ENCODE measurements at regions of chr12 and their contacts with region 1.

Region 1: DNA sequence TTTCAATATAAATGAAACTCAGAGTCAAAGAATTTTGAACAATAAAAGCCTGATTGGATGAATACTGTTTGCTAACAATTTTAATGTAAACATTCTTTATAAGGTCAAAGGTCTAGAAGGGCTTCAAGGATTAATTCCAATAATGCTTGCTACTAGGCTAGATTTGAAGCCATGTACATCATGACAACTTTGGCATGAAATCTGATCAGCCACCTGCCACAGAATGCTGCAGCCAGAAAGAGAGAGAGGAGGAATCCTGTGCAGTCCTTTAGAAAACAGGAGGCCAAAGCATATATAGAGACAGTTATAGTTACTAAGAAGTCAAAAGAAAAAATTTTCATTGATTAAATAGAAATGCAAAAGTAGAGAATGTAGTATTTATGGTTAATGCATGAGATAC is 47.1 kb downstream of the ABCD2 start:
- DNase-seq: no peak
- ATAC-seq: no peak
- H3K4me3 ChIP-seq: no peak overlapping the region
- H3K27ac ChIP-seq: no peak overlapping the region
- H3K4me1 ChIP-seq: no peaks in the 10 kb centered on the region
- H3K27me3 ChIP-seq: no peaks in the 10 kb centered on the region
- CTCF ChIP-seq: no peak
- EP300 ChIP-seq: no peak
- POLR2A ChIP-seq: no peak
- RAD21 ChIP-seq: no peak

Region 2: GRCh38 chr12:38892090-38892786 is 680.3 kb before region 1 on chr12:
- CTCF ChIA-PET with region 1: no interaction called
- POLR2A ChIA-PET with region 1: no interaction called
- in situ Hi-C with region 1: loop called (anchors 10 kb)
- intact Hi-C with region 1: no loop called
- DNase-seq: peak in 1 of 4 experiments; percentile 6
- ATAC-seq: no peak
- H3K4me3 ChIP-seq: no peak overlapping the region
- H3K27ac ChIP-seq: no peak overlapping the region
- H3K4me1 ChIP-seq: peaks cover 0 to 2% of the 10 kb centered on the region in 2 experiments; a peak in 2 of 5 replicates
- H3K27me3 ChIP-seq: no peaks in the 10 kb centered on the region
- CTCF ChIP-seq: no peak
- EP300 ChIP-seq: no peak
- POLR2A ChIP-seq: no peak
- RAD21 ChIP-seq: no peak

Region 3: GRCh38 chr12:39372929-39373328 is 199.6 kb before region 1 on chr12:
- CTCF ChIA-PET with region 1: no interaction called
- POLR2A ChIA-PET with region 1: no interaction called
- in situ Hi-C with region 1: no loop called
- intact Hi-C with region 1: no loop called
- DNase-seq: no peak
- ATAC-seq: peak; percentile 80
- H3K4me3 ChIP-seq: no peak overlapping the region
- H3K27ac ChIP-seq: no peak overlapping the region
- H3K4me1 ChIP-seq: peaks cover 0 to 8% of the 10 kb centered on the region in 2 experiments; a peak in 1 of 5 replicates
- H3K27me3 ChIP-seq: no peaks in the 10 kb centered on the region
- CTCF ChIP-seq: no peak
- EP300 ChIP-seq: no peak
- POLR2A ChIP-seq: no peak
- RAD21 ChIP-seq: no peak